ENCODE measurements at regions of chr1 and their contacts with region 1.

Region 1: GRCh38 chr1:101291562-101292380 is 55.0 kb downstream of the S1PR1 start:
- DNase-seq: no peak
- H3K4me3 ChIP-seq: no peak overlapping the region
- H3K27ac ChIP-seq: peak overlapping the region in 5 of 8 donors; percentile 9 to 56 (median 40)
- H3K4me1 ChIP-seq: peaks cover 13 to 58% (median 43%) of the 10 kb centered on the region in 6 donors
- H3K27me3 ChIP-seq: no peaks in the 10 kb centered on the region
- CTCF ChIP-seq: no peak
- POLR2A ChIP-seq: no peak

Region 2: GRCh38 chr1:100921109-100921706 is 370.6 kb before region 1 on chr1:
- intact Hi-C with region 1: loop called (anchors 5 kb)
- DNase-seq: no peak
- H3K4me3 ChIP-seq: no peak overlapping the region
- H3K27ac ChIP-seq: no peak overlapping the region
- H3K4me1 ChIP-seq: peaks cover 0 to 47% (median 15%) of the 10 kb centered on the region in 6 donors
- H3K27me3 ChIP-seq: no peaks in the 10 kb centered on the region
- CTCF ChIP-seq: peak; percentile 49 to 82 (median 72)
- POLR2A ChIP-seq: no peak

Region 3: GRCh38 chr1:101136739-101137138 is 155.0 kb before region 1 on chr1:
- intact Hi-C with region 1: loop called (anchors 10 kb)
- DNase-seq: no peak
- H3K4me3 ChIP-seq: no peak overlapping the region
- H3K27ac ChIP-seq: peak overlapping the region in 4 of 8 donors; percentile 3 to 37 (median 20)
- H3K4me1 ChIP-seq: peaks cover 11 to 47% (median 29%) of the 10 kb centered on the region in 6 donors
- H3K27me3 ChIP-seq: no peaks in the 10 kb centered on the region
- CTCF ChIP-seq: peak in 3 of 11 experiments; percentile 19 to 25 (median 21)
- POLR2A ChIP-seq: no peak

Region 4: DNA sequence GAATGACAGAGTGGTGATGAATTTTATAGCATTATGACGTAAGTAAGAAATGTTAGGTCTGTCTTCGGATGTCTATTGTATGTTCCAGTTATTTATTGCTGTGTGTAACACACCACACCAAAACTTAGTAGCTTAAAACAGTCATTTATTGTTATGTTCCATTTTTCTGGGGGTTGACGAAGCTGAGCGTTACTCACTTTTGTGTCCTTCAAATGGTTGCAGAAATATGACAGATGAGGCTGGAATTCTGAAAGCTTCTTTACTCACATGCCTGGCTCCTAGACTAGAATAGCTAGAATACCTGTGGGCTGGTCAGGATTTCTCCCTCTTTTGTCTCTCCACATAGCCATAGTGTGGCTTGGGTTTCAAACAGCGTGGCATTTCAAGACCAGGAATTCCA is 117.0 kb before region 1 on chr1:
- intact Hi-C with region 1: no loop called
- DNase-seq: no peak
- H3K4me3 ChIP-seq: no peak overlapping the region
- H3K27ac ChIP-seq: no peak overlapping the region
- H3K4me1 ChIP-seq: peaks cover 5 to 15% (median 11%) of the 10 kb centered on the region in 6 donors
- H3K27me3 ChIP-seq: no peaks in the 10 kb centered on the region
- CTCF ChIP-seq: no peak
- POLR2A ChIP-seq: no peak

Measured in spleen (tissue), 13 donors.